Head of caudate nucleus (tissue), 42 donors: ENCODE measurements at regions of chr16 and their contacts with region 1.

Region 1: DNA sequence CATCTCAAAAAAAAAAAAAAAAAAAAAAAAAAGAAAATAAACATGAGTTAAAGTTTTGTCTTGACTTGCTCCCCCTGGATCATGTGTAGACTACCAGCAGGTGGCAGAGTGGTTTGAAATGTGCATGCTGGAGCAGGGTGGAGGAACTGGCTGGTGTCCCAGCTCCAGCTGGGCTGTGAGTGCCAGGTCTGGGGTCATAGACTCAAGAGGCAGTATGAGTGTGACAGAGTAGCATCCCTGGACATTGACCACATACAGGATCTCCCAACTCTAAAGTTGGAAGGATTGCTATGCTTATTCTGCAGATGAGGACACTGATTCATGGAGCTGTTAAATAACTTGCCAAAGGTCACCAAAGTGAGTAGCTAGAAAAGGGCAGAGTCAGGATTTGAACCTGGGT is 198.0 kb upstream of the MPHOSPH6 start:
- DNase-seq: peak in 41 of 42 donors; percentile 22 to 85 (median 67)

Region 2: DNA sequence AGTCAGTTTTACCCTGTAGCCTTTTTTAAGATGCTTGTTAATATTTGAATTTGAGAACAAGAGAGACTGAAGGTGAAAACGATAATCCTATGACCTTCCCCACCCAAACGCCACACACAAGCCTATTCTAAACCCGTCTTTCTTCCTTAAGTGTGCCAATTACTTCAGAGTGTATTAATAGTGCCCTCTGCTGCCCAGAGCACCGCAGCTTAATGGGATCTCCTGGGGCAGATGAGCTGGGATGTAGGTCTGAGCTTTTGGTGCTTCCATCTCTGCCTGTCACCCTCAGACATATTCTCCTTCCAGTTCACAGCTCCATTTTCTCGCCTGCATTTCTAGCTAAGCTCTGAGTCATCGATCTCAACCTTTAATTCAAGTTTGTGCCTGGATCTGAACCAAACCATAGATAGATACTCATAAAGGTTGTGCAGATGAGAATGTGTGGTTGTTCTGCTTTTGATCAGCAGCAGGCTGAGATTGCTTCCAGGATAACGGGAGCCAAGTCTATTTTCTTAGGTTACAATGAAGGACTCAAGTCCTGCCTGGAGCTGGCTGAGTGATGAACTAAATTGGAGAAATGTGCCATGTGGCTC is 212.4 kb after region 1 on chr16:
- intact Hi-C with region 1: loop called (anchors 10 kb)
- DNase-seq: peak in 41 of 42 donors; percentile 11 to 85 (median 62)